Activated CD8-positive, alpha-beta T cell treated with anti-CD3 and anti-CD28 coated beads for 36 hours (primary cell): ENCODE measurements at regions of chr17 and their contacts with region 1.

Region 1: GRCh38 chr17:21214015-21214776 is at the start of gene TMEM11:
- DNase-seq: peak; percentile 96
- ATAC-seq: peak; percentile 95
- H3K4me3 Mint-ChIP-seq: peak within 1 kb of the TSS; percentile 95
- H3K27ac Mint-ChIP-seq: peak within 1 kb of the TSS; percentile 94
- H3K4me1 Mint-ChIP-seq: peaks cover 68% of the 10 kb centered on the region
- H3K27me3 Mint-ChIP-seq: no peaks in the 10 kb centered on the region
- CTCF ChIP-seq: no peak
- total RNA-seq, gene TMEM11: 26.2 to 28.9 TPM

Region 2: GRCh38 chr17:21081967-21082366 is 132.2 kb before region 1 on chr17:
- CTCF ChIA-PET with region 1: no interaction called
- POLR2A ChIA-PET with region 1: no interaction called
- intact Hi-C with region 1: no loop called
- DNase-seq: no peak
- ATAC-seq: peak; percentile 30
- H3K4me3 Mint-ChIP-seq: no peak overlapping the region
- H3K27ac Mint-ChIP-seq: no peak overlapping the region
- H3K4me1 Mint-ChIP-seq: no peaks in the 10 kb centered on the region
- H3K27me3 Mint-ChIP-seq: peaks cover 7% of the 10 kb centered on the region
- CTCF ChIP-seq: no peak

Region 3: DNA sequence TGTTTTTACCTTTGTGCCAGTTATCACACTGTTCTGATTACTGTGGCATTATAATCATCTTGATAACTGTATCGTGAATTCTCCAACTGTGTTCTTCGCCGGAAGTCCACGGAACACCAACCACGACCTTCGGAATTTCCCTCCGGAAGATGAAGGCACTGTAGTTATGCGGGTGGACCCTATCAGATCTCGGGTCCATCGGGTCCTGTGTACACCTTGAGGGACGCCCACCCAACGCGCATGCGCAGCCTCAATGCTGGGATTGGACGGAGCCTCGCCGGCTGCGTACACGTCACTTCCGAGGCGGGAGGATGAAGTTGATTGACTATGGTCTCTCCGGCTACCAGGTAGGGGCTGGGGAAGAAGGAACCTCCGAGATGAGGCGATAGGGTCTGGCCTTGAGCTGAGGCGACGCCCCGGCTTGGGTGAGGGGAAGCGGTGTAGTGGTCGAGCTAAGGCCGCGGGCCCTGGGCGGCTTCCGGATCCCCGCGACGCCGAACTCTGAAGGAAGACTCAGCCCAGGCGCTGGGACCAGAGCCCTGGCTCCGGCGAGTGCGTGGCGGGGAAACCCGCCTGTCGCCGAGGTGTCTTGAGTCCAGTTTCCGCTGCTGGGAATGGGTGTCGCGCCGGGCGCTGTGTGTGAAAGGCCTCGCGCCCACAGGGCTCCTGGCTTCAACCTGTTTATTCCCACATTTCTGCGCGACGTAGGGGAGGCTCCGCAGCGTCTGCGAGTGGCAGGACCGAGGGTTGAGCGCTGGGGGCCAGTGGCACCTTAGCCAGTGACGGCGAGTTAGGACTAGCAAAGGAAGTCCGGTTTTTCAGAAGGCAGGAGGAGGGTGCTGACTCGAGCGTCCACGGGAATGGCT is 87.3 kb before region 1 on chr17 and contains the start of gene DHRS7B:
- CTCF ChIA-PET with region 1: interaction called, 4 read pairs
- POLR2A ChIA-PET with region 1: interaction called, 14 read pairs
- intact Hi-C with region 1: loop called (anchors 2 kb)
- DNase-seq: peak; percentile 98
- ATAC-seq: peak; percentile 94
- H3K4me3 Mint-ChIP-seq: peak within 1 kb of the TSS; percentile 96
- H3K27ac Mint-ChIP-seq: peak within 1 kb of the TSS; percentile 98
- H3K4me1 Mint-ChIP-seq: peaks cover 27% of the 10 kb centered on the region
- H3K27me3 Mint-ChIP-seq: no peaks in the 10 kb centered on the region
- CTCF ChIP-seq: no peak
- total RNA-seq, gene DHRS7B: 13.5 to 15.3 TPM

Region 4: GRCh38 chr17:21160401-21160800 is 53.8 kb before region 1 on chr17:
- CTCF ChIA-PET with region 1: no interaction called
- POLR2A ChIA-PET with region 1: no interaction called
- intact Hi-C with region 1: no loop called
- DNase-seq: no peak
- ATAC-seq: no peak
- H3K4me3 Mint-ChIP-seq: no peak overlapping the region
- H3K27ac Mint-ChIP-seq: no peak overlapping the region
- H3K4me1 Mint-ChIP-seq: peaks cover 16% of the 10 kb centered on the region
- H3K27me3 Mint-ChIP-seq: no peaks in the 10 kb centered on the region
- CTCF ChIP-seq: no peak

Region 5: DNA sequence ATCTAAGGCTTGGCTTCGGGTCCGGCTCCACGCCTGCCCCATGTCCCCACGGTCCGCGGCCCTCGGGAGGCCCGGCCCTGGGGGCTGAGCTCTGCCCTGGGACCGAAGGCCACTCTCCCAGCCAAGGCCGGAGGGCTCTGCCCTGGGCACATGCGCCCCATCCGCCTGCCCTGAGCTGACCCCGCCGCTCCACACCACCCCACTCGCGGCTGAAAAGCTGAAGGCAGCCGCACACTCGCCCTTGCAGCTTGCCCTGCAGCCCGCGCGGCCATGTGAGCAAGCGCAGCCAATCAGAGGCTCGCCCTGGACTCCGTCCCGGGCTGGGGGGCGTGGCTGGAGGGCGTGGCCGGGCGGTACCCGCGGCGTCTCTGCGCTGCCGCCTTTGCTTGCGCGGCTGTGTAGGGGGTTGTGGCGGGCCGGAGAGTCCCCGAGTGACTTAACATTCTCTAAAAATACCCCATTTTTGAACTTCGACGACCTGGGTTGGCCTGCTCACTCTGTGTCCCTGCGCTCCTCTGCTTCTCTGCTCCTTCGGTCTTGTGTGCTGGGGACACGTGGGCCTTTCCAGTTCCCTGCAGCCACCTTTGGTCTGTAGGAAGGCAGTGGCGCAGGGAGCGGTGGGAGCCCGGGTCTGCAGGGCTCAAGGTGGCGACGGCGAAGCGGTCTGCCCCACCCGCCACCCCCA is 61.5 kb after region 1 on chr17:
- CTCF ChIA-PET with region 1: interaction called, 10 read pairs
- POLR2A ChIA-PET with region 1: interaction called, 4 read pairs
- intact Hi-C with region 1: no loop called
- DNase-seq: peak; percentile 96
- ATAC-seq: peak; percentile 85
- H3K4me3 Mint-ChIP-seq: peak overlapping the region; percentile 82
- H3K27ac Mint-ChIP-seq: peak overlapping the region; percentile 87
- H3K4me1 Mint-ChIP-seq: peaks cover 38% of the 10 kb centered on the region
- H3K27me3 Mint-ChIP-seq: no peaks in the 10 kb centered on the region
- CTCF ChIP-seq: peak; percentile 6

Region 6: GRCh38 chr17:21284319-21285163 is 70.3 kb after region 1 on chr17 and contains the start of gene MAP2K3:
- CTCF ChIA-PET with region 1: interaction called, 10 read pairs
- POLR2A ChIA-PET with region 1: interaction called, 10 read pairs
- intact Hi-C with region 1: loop called (anchors 1 kb)
- DNase-seq: peak; percentile 99
- ATAC-seq: peak; percentile 78
- H3K4me3 Mint-ChIP-seq: peak within 1 kb of the TSS; percentile 99
- H3K27ac Mint-ChIP-seq: peak within 1 kb of the TSS; percentile 95
- H3K4me1 Mint-ChIP-seq: peaks cover 48% of the 10 kb centered on the region
- H3K27me3 Mint-ChIP-seq: no peaks in the 10 kb centered on the region
- CTCF ChIP-seq: no peak
- total RNA-seq, gene MAP2K3: 151 to 153 TPM